AG04449 (cell line): ENCODE measurements at regions of chr19 and their contacts with region 1.

Region 1: DNA sequence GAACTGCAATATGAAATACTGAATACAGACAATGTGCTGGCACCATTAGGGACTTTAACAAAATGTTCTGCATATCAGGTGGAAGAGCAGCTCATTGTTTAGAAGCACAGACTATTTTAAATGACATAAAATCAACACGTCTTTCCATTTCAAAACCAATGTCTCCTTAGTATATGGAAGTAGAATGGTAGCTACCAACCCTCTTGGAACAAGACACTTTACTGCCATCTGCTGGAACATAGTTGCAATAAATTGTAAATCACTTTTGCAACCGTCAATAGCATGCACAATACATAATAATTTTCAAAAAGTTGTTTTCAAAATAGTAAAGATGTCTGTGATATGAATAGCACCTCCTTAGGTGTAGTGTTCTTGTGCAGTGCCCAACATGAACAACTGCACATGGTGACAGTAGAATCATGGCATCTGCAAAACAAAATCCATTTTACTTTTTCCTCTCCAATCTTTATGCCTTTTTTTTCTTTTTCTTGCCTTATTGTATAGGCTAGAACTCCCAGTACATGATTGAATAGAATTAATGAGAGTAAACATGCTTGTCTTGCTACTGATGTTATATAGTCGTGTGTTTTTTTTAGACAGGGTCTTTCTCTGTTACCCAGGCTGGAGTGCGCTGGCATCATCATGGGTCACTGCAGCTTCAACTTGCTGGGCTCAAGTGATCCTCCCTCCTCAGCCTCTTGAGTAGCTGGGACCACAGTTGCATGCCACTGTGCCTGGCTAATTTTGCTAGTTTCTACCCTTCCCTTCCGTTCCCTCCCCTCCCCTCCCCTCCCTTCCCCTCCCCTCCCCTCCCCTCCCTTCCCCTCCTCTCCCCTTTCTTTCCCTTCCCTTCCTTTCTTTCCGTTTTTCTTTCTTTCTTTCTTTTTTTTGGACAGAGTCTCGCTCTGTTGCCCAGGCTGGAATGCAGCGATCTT is 7.8 kb upstream of the LYPD5 start:
- DNase-seq: peak; percentile 17
- H3K4me3 ChIP-seq: no peak overlapping the region
- CTCF ChIP-seq: peak; percentile 52

Region 2: DNA sequence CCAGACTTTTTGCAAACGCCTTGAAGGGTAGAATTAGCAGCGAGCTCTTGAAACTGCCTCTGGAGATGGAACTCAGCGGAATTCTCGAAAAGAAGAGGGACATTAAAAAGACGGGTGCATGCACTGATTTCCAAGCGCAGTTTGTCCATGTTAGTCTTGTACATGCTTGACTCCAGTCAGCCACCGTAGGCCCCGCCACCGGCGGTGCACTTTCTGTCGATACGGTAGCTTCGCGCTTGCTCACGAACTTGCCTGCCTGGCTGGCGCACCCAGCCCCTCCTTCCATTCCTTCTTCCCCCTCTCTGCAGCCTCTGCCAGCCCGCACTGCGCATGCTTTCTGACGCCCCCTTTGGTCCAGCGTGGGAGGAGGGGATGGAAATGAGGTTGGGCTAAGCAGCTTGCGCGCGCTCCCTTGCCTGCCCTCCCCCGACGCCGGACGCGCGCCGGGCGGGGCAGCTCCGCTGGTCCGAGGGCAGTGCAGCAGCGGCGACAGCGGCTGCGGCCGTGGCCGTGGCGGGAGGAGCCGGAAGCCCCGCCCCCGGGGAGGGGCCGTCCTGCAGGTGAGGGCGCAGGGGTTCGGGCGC is 277.0 kb before region 1 on chr19 and contains the start of gene ZNF575:
- CTCF ChIA-PET with region 1: interaction called, 25 read pairs
- POLR2A ChIA-PET with region 1: no interaction called
- DNase-seq: peak; percentile 79
- H3K4me3 ChIP-seq: peak within 1 kb of the TSS; percentile 66
- CTCF ChIP-seq: no peak

Region 3: DNA sequence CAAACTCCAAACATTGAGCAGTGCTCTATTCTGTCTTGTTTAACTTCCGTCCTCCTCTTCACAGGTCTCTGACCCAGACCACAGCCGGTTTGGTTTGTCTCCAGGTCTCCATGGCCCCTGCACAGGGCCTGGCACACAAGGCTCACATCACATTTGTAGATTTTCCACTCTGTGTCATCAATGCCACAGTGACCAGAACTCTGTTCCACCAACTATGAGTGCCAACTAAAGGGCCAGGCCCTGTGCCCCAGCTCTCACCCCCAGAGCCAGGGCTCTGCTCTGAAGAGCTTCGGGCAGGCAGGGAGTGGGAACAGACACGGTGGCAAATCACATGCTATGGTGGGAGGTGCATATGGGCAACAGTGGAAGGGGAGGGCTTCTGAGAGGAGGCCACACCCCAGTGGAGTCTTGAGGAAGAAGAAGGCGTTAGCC is 71.2 kb before region 1 on chr19:
- CTCF ChIA-PET with region 1: interaction called, 51 read pairs
- POLR2A ChIA-PET with region 1: no interaction called
- DNase-seq: no peak
- H3K4me3 ChIP-seq: no peak overlapping the region
- CTCF ChIP-seq: no peak

Region 4: GRCh38 chr19:43747557-43748204 is 62.3 kb before region 1 on chr19:
- CTCF ChIA-PET with region 1: interaction called, 51 read pairs
- POLR2A ChIA-PET with region 1: no interaction called
- DNase-seq: no peak
- H3K4me3 ChIP-seq: no peak overlapping the region
- CTCF ChIP-seq: no peak

Region 5: DNA sequence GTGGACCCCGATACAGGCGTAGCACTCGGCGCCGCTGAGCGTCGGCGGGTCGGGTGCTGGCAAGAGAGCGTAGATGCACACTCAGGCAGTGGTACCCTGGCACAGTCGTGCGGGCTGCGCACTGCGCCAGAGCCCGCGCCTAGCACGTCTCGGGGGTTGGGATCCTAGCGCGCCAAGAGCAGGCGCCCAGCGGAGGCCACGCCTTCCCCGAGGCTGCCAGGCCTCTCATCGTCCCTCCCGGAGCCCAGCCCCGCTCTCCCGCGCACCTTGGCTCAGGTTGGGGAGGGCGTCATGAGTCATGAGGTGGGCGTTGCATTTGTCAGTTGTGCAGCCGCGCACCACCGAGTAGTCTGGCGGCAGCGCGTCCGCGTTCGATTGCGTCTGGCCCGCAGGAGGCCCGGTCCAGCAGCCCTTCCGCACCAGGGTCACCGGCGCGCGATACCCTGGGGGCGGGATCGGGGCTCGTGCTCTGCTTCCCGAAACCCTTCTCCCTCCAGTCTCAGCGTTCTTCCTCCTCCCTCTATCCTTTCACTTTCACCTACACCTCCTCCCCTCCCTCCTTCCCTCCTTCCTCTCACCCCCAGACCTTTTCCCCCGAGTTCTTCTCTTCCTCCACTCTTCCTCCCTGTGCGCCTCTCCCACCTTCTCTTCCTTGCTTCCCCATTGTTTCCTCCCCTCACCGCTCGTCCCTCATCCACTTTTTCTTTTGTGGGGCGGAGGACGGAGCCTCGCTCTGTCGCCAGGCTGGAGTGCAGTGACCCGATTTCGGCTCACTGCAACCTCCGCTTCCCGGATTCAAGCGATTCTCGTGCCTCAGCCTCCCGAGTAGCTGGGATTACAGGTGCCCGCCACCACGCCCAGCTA is 11.3 kb before region 1 on chr19:
- CTCF ChIA-PET with region 1: interaction called, 17 read pairs
- POLR2A ChIA-PET with region 1: no interaction called
- DNase-seq: no peak
- H3K4me3 ChIP-seq: peak overlapping the region; percentile 61
- CTCF ChIP-seq: no peak

Region 6: GRCh38 chr19:43842007-43842406 is 32.0 kb after region 1 on chr19:
- CTCF ChIA-PET with region 1: no interaction called
- POLR2A ChIA-PET with region 1: no interaction called
- DNase-seq: no peak
- H3K4me3 ChIP-seq: no peak overlapping the region
- CTCF ChIP-seq: no peak